Lower leg skin (tissue), 4 donors: ENCODE measurements at regions of chr2 and their contacts with region 1.

Region 1: GRCh38 chr2:173027181-173028128 is 48.2 kb upstream of the MAP3K20 start:
- DNase-seq: peak; percentile 93 to 96
- H3K4me3 ChIP-seq: no peak overlapping the region
- CTCF ChIP-seq: peak in 1 of 3 donors; percentile 91
- POLR2A ChIP-seq: no peak

Region 2: GRCh38 chr2:172806493-172806892 is 221.0 kb before region 1 on chr2:
- intact Hi-C with region 1: loop called (anchors 10 kb)
- DNase-seq: no peak
- H3K4me3 ChIP-seq: no peak overlapping the region
- CTCF ChIP-seq: peak in 1 of 3 donors; percentile 20
- POLR2A ChIP-seq: no peak

Region 3: GRCh38 chr2:173210270-173211196 is 183.1 kb after region 1 on chr2:
- intact Hi-C with region 1: loop called (anchors 5 kb)
- DNase-seq: peak in 1 of 2 donors; percentile 86
- H3K4me3 ChIP-seq: no peak overlapping the region
- CTCF ChIP-seq: peak in 1 of 3 donors; percentile 91
- POLR2A ChIP-seq: no peak

Region 4: GRCh38 chr2:174341286-174341994 is 1314.0 kb after region 1 on chr2:
- intact Hi-C with region 1: loop called (anchors 10 kb)
- DNase-seq: peak; percentile 84 to 97
- H3K4me3 ChIP-seq: no peak overlapping the region
- CTCF ChIP-seq: peak in 1 of 3 donors; percentile 90
- POLR2A ChIP-seq: no peak

Region 5: GRCh38 chr2:174908284-174908683 is 1880.8 kb after region 1 on chr2:
- intact Hi-C with region 1: no loop called
- DNase-seq: no peak
- H3K4me3 ChIP-seq: no peak overlapping the region
- CTCF ChIP-seq: no peak
- POLR2A ChIP-seq: no peak